Mammary epithelial cell (primary cell): ENCODE measurements at regions of chr3 and their contacts with region 1.

Region 1: GRCh38 chr3:182182531-182182968 is 470.8 kb downstream of the SOX2 start:
- DNase-seq: peak; percentile 95
- H3K4me3 ChIP-seq: no peak overlapping the region
- H3K27ac ChIP-seq: no peak overlapping the region
- H3K4me1 ChIP-seq: peaks cover 28% of the 10 kb centered on the region
- H3K27me3 ChIP-seq: no peaks in the 10 kb centered on the region
- CTCF ChIP-seq: no peak

Region 2: GRCh38 chr3:181868576-181869082 is 313.9 kb before region 1 on chr3:
- CTCF ChIA-PET with region 1: no interaction called
- dilution Hi-C with region 1: no loop called
- in situ Hi-C with region 1: no loop called
- intact Hi-C with region 1: no loop called
- DNase-seq: no peak
- H3K4me3 ChIP-seq: no peak overlapping the region
- H3K27ac ChIP-seq: no peak overlapping the region
- H3K4me1 ChIP-seq: no peaks in the 10 kb centered on the region
- H3K27me3 ChIP-seq: no peaks in the 10 kb centered on the region
- CTCF ChIP-seq: no peak

Region 3: DNA sequence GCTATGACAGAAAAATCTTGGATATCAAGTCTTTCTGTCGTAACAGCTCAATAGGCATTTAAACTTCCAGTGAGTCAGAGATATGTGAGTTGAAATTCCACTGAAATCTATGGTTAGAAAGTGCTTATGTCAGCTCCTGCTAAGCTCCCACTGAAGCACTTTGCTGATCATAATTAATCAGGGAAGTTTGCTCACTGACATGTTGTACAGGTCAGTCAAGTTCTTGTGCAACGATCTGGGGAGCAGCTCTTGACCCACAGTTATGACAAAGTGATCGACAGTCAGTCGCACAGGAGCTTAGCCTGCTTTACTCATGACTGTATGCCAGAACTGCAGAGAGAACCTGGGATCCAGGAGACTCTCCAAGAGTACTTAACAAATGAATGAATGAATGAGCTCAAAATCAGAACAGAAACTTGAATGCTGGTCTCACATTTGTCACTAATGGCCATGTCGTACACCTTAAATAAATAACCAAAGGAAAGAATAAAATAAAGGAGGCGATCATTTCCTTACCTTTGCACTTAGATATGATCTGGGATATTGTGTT is 17.2 kb before region 1 on chr3:
- CTCF ChIA-PET with region 1: no interaction called
- dilution Hi-C with region 1: no loop called
- in situ Hi-C with region 1: no loop called
- intact Hi-C with region 1: loop called (anchors 2 kb)
- DNase-seq: peak; percentile 76
- H3K4me3 ChIP-seq: no peak overlapping the region
- H3K27ac ChIP-seq: no peak overlapping the region
- H3K4me1 ChIP-seq: peaks cover 9% of the 10 kb centered on the region
- H3K27me3 ChIP-seq: no peaks in the 10 kb centered on the region
- CTCF ChIP-seq: no peak

Region 4: DNA sequence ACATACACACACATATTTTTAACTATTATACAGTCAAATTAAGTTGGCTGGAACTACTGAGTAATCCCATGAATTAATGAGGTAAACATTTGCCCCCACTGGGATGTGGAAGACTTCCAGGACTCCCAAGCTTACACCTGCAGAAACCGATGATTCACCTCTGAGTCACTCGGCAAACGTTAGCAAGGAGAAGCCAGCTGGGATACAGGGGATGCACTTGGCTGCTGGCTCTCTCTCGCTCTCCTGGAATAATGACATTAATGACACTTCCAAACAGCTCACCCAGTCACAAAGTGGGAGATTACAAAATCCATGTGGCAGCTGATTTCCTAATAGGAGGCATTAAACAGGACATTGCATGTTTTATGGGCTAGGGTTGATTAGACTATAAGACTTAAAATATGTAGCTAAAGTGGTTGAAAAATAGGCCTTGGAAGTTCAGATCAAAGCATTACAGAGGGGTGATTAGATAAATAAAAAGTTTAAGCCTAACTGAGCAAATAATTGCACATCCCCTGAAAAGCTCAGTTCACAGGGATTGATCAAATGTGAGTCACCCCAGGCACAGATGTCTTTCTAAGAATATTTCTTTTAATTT is 30.0 kb after region 1 on chr3:
- CTCF ChIA-PET with region 1: no interaction called
- dilution Hi-C with region 1: no loop called
- in situ Hi-C with region 1: no loop called
- intact Hi-C with region 1: loop called (anchors 1 kb)
- DNase-seq: peak; percentile 98
- H3K4me3 ChIP-seq: no peak overlapping the region
- H3K27ac ChIP-seq: peak overlapping the region; percentile 55
- H3K4me1 ChIP-seq: peaks cover 16% of the 10 kb centered on the region
- H3K27me3 ChIP-seq: no peaks in the 10 kb centered on the region
- CTCF ChIP-seq: no peak

Region 5: DNA sequence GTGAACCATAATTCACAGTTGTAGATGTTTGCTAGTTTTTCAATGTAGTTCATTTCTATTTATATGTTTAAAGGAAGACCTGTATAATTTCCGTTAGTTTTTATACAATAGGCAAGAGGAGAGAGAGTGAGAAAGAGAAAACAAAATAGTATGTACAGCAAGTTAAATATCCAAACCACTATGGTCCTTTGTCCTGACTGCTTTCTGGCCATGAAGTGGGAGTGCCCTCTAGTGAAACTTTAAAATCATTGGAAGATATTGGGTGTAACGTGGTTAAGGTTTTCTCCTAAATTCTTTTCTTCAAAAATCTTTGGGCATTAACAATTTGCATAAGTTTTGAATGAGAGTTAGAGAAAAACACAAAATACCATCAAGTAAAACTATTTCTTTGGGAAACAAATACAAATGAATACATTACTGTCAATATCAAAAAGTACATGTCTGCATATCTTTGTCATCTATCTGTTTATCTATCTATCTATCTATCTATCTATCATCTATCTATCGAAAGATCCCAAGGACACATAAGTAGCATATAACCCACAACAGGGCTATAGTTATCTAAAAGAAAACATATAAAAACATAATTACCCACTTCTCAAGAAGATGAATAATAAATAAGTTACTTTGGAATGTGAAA is 76.1 kb after region 1 on chr3:
- CTCF ChIA-PET with region 1: no interaction called
- dilution Hi-C with region 1: no loop called
- in situ Hi-C with region 1: no loop called
- intact Hi-C with region 1: no loop called
- DNase-seq: peak; percentile 31
- H3K4me3 ChIP-seq: no peak overlapping the region
- H3K27ac ChIP-seq: no peak overlapping the region
- H3K4me1 ChIP-seq: peaks cover 3% of the 10 kb centered on the region
- H3K27me3 ChIP-seq: no peaks in the 10 kb centered on the region
- CTCF ChIP-seq: peak; percentile 59 to 83